OCI-LY7 (cell line): ENCODE measurements at regions of chr16 and their contacts with region 1.

Region 1: DNA sequence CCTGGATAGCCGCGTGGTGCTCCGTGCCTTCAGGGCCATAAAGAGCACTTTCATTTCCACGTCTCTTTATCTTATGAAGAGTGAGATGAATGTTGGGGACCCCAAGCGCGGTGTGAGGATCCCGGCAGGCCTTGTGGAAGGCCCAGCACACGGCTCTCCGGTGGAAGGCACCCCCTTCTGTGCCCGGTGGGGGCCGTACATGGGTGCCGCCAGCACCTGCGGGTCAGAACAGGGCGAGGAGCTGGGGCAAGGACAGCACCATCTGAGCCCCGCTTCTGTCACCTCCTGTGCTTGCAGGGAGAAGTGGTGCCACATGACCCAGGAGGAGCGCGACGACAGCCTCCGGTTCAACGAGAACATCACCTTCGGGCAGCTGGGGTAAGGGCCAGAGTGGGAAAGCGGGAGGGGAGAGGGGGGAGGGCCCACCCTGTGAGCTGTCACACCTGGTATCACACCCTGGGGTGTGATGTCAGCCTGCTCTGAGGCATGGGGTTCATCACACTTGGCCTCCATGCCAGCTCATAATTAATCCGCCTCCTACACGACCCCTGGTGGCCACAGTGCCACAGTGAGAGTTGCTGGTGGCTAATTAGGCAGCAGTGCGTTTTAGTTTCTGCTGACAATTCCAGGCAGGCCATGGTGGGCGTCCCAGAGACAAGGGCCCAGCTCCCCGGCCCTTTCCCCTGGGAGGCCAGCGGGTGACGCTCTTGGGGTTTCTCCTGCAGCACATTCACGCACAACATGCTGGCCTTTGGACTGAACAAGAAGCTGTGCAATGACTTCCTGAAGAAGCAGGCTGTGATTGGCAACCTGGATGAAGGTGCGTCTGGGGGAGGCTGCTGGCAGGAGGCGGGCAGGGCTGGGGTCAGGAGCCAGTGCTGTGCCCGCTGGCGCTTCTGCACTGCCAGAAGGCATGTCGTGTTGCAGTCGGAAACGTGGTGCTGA is 25.7 kb downstream of the CIBAR2 start:
- DNase-seq: peak; percentile 76
- H3K4me3 ChIP-seq: no peak overlapping the region
- H3K27ac ChIP-seq: no peak overlapping the region
- H3K4me1 ChIP-seq: peaks cover 49% of the 10 kb centered on the region
- CTCF ChIP-seq: peak; percentile 78

Region 2: GRCh38 chr16:85010931-85011845 is 75.4 kb before region 1 on chr16 and contains the start of gene ZDHHC7:
- CTCF ChIA-PET with region 1: no interaction called
- POLR2A ChIA-PET with region 1: interaction called, 4 read pairs
- intact Hi-C with region 1: loop called (anchors 5 kb)
- DNase-seq: peak; percentile 91
- H3K4me3 ChIP-seq: peak within 1 kb of the TSS; percentile 98
- H3K27ac ChIP-seq: peak within 1 kb of the TSS; percentile 72
- H3K4me1 ChIP-seq: peaks cover 8% of the 10 kb centered on the region
- CTCF ChIP-seq: peak; percentile 38; the same call in 1 of the 2 replicates
- total RNA-seq, gene ZDHHC7: 17.3 and 24.3 TPM in 2 replicates

Region 3: GRCh38 chr16:85027349-85027957 is 59.2 kb before region 1 on chr16 and contains the start of gene KIAA0513:
- CTCF ChIA-PET with region 1: no interaction called
- POLR2A ChIA-PET with region 1: interaction called, 4 read pairs
- intact Hi-C with region 1: loop called (anchors 1 kb)
- DNase-seq: peak; percentile 97
- H3K4me3 ChIP-seq: peak within 1 kb of the TSS; percentile 74
- H3K27ac ChIP-seq: no peak within 1 kb of the TSS
- H3K4me1 ChIP-seq: peaks cover 13% of the 10 kb centered on the region
- CTCF ChIP-seq: peak; percentile 43
- total RNA-seq, gene KIAA0513: 0.59 and 4.8 TPM in 2 replicates

Region 4: GRCh38 chr16:85137323-85138072 is 50.9 kb after region 1 on chr16:
- CTCF ChIA-PET with region 1: no interaction called
- POLR2A ChIA-PET with region 1: no interaction called
- intact Hi-C with region 1: no loop called
- DNase-seq: no peak
- H3K4me3 ChIP-seq: no peak overlapping the region
- H3K27ac ChIP-seq: no peak overlapping the region
- H3K4me1 ChIP-seq: peaks cover 9% of the 10 kb centered on the region
- CTCF ChIP-seq: no peak